ENCODE measurements at regions of chr1 and their contacts with region 1.

Region 1: DNA sequence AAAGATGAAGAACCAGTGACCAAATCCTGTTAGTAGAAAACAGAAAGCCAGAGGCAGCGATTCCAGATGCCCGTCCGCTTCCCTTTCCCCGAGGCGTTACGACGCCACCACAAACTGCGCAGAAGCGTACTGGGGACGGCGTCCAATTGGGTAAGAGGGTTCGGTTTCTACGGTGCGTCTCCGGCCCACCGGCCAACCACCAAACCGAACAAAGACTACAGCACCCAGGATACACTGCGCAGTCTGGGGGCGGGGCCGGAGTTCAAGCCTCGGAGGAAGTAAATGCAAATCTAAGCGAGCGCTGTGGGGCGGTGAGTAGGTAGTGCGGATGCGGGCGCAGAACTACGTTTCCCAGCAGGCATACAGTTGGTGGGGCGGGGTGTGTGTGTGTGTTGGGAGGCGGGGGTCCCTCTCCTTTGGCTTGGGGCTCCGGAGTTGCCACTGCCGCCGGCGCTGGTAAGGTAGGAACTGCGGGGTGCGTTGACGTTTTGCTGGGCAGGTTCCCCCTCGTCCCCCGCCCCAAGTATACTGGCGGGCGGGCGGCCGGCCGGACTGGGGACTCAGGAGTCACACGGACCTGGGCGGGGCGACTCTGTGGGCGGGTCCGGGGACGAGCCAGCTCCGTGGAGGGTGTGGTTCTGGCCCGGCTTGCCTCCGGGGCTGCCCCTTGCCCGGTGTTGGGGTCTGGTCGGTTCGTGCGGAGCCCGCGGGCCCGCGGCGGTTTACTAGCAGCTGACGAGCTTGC is at the starts of genes SWT1 and TRMT1L:
- DNase-seq: peak; percentile 99 to 100 (median 100)

Region 2: GRCh38 chr1:184754476-184755225 is 402.4 kb before region 1 on chr1 and contains the start of gene EDEM3:
- intact Hi-C with region 1: loop called (anchors 2 kb)
- DNase-seq: peak; percentile 94 to 100 (median 99)

Region 3: GRCh38 chr1:184805667-184806295 is 351.2 kb before region 1 on chr1:
- intact Hi-C with region 1: loop called (anchors 5 kb)
- DNase-seq: peak; percentile 78 to 95 (median 90)

Region 4: DNA sequence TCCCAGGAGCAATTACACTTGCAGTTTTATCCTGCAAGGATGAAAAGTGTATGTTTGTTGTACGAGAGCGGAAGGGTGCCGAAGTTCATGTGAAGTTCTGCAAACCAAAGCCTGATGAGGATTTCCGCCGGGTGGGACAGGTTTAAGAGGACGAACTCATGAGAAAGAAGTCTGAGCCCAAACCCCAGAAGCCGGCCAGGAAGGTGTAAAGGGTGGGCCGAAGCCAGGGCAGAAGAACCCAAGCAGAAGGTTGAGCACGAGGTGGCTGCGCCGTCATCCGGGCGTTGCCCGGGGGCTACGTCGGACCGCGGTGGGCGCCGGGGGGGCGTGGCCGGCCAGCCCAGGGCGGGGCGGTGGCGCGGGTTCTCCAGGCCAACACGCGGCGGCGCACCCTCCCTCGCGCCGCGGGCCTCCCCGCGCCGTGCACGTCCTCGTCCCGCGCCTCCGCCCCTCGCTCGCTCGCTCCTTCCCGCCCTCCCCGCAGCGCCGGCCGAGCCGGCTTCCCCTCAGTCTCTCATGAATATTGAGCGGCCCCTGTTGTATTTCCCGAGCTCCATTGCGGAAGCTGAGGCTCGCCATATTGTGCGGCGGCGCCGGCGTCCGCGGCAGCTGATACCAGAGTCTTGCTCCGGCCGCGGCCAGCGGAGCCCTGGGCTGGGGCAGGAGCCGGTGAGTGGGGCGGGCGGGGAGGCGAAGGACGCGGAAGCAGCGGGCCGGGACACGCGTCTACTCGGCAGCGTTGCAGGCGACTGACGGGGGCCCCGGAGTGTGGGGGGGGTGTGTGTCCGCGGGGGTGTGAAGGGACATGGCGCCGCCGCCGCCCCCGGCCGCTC is 111.8 kb before region 1 on chr1 and contains the start of gene RNF2:
- intact Hi-C with region 1: loop called (anchors 5 kb)
- DNase-seq: peak; percentile 54 to 92 (median 83)

Region 5: DNA sequence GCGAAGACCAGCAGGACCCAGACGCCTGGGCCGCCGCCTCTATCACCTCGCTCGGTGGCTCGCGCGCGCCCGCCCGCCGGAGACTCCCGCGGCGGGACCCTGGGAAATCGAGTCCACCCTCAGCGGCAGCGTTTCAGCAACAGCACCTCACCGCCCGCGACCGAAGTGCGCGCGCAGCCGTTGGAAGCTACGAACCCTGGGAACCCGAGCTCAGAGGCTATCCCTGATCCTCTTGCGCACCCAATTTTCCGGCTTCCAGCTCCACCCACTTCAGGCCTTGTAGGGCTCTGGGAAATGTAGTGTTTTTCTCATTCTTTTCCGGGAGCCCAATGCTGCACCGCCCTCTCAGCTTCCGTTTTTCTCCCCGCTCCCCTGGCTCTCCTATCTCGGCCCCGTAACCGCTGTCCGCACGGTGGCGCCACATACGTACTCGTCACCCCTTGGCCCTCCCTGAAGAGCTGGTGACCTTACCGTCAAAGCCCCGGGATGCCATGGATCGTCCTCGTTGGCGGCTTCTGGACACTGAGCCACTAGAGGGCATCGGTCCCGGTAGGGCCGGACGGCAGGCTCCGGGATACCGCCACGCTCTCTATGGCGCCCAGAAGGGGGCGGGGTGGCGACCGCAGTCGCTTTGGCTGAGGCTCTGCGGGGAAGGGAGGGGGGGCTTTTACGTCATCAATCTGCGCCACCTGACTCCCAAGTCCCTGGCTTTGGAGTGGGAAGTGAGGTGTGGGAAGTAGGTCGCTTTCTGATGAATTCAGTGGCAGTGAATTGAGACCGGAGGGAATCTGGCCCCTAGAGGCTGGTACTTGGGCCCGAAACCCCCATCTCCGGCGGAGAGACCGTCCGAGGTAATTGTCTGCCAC is 1218.3 kb after region 1 on chr1 and contains the starts of genes ODR4 and TPR:
- intact Hi-C with region 1: loop called (anchors 10 kb)
- DNase-seq: peak; percentile 94 to 99 (median 97)